ENCODE measurements at regions of chr2 and their contacts with region 1.

Region 1: DNA sequence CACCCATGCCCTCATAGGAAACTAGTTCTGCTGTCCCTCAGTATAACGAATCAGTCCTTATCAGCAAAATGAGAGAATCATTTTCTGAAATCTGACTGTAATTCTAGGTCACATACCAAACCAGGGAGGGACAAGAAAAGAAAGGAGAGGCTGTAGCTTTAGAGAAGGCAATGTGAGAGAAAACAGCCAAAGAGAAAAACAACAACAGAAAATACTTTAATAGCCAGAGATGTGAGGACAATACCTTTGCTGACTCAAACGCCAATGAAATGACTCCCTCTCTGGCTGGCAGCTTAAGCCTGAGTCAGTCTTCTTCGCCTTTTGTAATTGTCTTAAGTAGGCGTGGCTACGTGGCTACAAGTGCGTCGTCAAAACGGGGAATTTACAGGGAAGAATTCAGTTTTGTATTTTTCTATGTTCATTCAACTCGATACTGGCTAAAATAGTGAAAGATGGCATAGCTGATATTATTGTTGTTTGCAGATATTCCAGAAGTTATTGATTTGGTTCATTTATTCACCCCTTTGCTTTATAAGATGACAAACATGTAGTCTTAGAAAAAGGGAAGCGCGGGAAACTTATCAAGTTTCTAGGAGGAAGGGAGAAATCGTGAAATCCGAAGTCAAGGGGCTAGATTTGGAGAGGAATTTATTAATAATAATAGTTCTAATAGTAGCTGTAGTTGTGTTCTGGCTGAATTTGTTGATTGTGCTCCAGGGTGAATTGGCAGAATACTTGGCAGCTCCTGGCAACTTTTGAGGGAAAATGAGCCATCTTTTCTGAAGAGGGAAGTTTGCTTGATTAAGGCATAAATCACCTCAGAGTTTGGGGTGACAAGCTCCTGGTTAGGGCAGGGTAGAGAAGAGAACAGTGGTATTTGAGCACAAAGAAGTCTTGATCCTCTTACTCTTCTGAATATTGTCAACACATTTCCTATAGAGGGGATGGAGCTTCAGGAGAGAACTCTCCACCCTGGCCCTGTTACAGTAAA is at the start of gene IL1A:
- DNase-seq: no peak
- ATAC-seq: no peak
- H3K4me3 ChIP-seq: no peak within 1 kb of the TSS
- H3K27ac ChIP-seq: peak within 1 kb of the TSS; percentile 62
- H3K4me1 ChIP-seq: peaks cover 23% of the 10 kb centered on the region
- H3K27me3 ChIP-seq: no peaks in the 10 kb centered on the region
- CTCF ChIP-seq: no peak
- EP300 ChIP-seq: no peak
- POLR2A ChIP-seq: peak; percentile 70
- RAD21 ChIP-seq: no peak
- polyA plus RNA-seq, gene IL1A: 5.7 to 8.7 TPM

Region 2: GRCh38 chr2:112757265-112757664 is 27.2 kb before region 1 on chr2:
- CTCF ChIA-PET with region 1: interaction called, 6 read pairs
- POLR2A ChIA-PET with region 1: interaction called, 4 read pairs
- RAD21 ChIA-PET with region 1: interaction called, 36 read pairs
- SMC1A ChIA-PET with region 1: interaction called, 30 read pairs
- in situ Hi-C with region 1: no loop called
- intact Hi-C with region 1: no loop called
- DNase-seq: no peak
- ATAC-seq: no peak
- H3K4me3 ChIP-seq: no peak overlapping the region
- H3K27ac ChIP-seq: no peak overlapping the region
- H3K4me1 ChIP-seq: no peaks in the 10 kb centered on the region
- H3K27me3 ChIP-seq: no peaks in the 10 kb centered on the region
- CTCF ChIP-seq: no peak
- EP300 ChIP-seq: no peak
- POLR2A ChIP-seq: no peak
- RAD21 ChIP-seq: no peak

Region 3: GRCh38 chr2:112764071-112765044 is 20.1 kb before region 1 on chr2 and contains the start of gene CKAP2L:
- CTCF ChIA-PET with region 1: interaction called, 5 read pairs
- POLR2A ChIA-PET with region 1: interaction called, 4 read pairs
- RAD21 ChIA-PET with region 1: interaction called, 10 read pairs
- SMC1A ChIA-PET with region 1: interaction called, 30 read pairs
- in situ Hi-C with region 1: no loop called
- intact Hi-C with region 1: no loop called
- DNase-seq: peak; percentile 94
- ATAC-seq: peak; percentile 98
- H3K4me3 ChIP-seq: peak within 1 kb of the TSS; percentile 81
- H3K27ac ChIP-seq: peak within 1 kb of the TSS; percentile 80
- H3K4me1 ChIP-seq: peaks cover 3% of the 10 kb centered on the region
- H3K27me3 ChIP-seq: no peaks in the 10 kb centered on the region
- CTCF ChIP-seq: no peak
- EP300 ChIP-seq: peak in 1 of 2 experiments; percentile 37; a peak in 1 of 4 replicates
- POLR2A ChIP-seq: peak; percentile 79
- RAD21 ChIP-seq: no peak; the same call in 1 of the 2 replicates
- polyA plus RNA-seq, gene CKAP2L: 10.5 to 19.7 TPM

Region 4: DNA sequence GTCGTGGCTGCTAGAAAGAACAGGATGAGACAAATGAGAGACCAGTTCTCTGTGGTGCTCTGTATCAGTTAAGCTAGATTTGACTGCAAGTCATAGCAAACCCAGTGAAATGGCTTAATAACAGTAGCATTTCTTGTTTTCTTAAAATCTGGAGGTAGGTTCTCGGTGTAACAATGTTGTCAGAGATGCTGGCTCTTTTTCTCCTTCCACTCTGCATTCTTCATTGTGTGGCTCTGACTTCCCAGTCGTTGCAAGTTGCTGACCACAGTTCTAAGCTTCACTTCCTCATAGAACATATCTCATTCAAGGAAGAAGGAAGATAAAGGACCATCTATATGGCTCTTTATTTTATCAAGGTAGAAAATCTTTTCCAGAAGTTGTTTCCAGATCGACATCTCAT is 12.2 kb before region 1 on chr2:
- CTCF ChIA-PET with region 1: interaction called, 6 read pairs
- POLR2A ChIA-PET with region 1: interaction called, 3 read pairs
- RAD21 ChIA-PET with region 1: interaction called, 4 read pairs
- SMC1A ChIA-PET with region 1: interaction called, 26 read pairs
- in situ Hi-C with region 1: no loop called
- intact Hi-C with region 1: no loop called
- DNase-seq: no peak
- ATAC-seq: no peak
- H3K4me3 ChIP-seq: no peak overlapping the region
- H3K27ac ChIP-seq: no peak overlapping the region
- H3K4me1 ChIP-seq: no peaks in the 10 kb centered on the region
- H3K27me3 ChIP-seq: no peaks in the 10 kb centered on the region
- CTCF ChIP-seq: no peak
- EP300 ChIP-seq: no peak
- POLR2A ChIP-seq: no peak
- RAD21 ChIP-seq: no peak

Region 5: DNA sequence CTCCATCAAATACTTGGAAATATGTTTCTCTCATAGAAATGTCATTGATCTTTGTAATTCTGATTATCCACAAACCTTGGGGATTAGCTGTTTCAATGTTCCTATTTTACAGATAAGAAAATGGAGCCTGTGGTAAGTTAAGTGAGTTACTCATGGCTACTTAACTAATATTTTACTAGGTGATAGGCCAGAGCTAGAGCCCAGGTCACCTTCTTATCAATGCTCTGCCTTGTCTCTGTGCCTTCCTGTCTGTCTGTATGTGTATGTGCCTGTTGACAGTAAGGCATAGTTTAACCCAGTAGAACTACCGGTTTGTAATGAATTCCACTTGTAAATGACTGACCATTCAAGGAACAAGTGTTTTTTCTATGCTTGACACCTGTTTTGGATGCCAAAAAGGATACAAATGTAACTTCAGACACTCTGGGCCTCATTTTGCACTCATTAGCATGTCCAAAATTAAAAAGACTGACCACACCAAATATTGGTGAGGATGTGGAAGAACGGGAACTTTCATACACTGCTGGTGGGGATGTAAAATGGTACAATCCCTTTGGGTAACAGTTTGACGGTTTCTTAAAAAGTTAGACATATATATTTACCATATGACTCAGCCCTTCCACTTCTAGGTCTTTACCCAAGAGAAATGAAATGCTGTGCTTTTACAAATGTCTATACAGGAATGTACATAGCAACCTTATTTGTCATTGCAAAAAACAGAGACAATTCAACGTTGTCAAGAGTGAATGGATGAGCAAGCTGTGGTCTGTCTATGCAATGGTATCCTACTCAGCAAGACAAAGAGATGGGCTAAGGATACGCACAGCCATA is 19.4 kb after region 1 on chr2:
- CTCF ChIA-PET with region 1: interaction called, 5 read pairs
- POLR2A ChIA-PET with region 1: interaction called, 6 read pairs
- RAD21 ChIA-PET with region 1: interaction called, 22 read pairs
- SMC1A ChIA-PET with region 1: interaction called, 33 read pairs
- in situ Hi-C with region 1: no loop called
- intact Hi-C with region 1: loop called (anchors 2 kb)
- DNase-seq: no peak
- ATAC-seq: peak; percentile 71
- H3K4me3 ChIP-seq: no peak overlapping the region
- H3K27ac ChIP-seq: peak overlapping the region; percentile 43
- H3K4me1 ChIP-seq: peaks cover 19% of the 10 kb centered on the region
- H3K27me3 ChIP-seq: no peaks in the 10 kb centered on the region
- CTCF ChIP-seq: no peak
- EP300 ChIP-seq: peak; percentile 47 to 69; a peak in 3 of 4 replicates
- POLR2A ChIP-seq: no peak
- RAD21 ChIP-seq: no peak

Region 6: GRCh38 chr2:112811841-112812306 is 27.4 kb after region 1 on chr2:
- CTCF ChIA-PET with region 1: interaction called, 8 read pairs
- POLR2A ChIA-PET with region 1: interaction called, 6 read pairs
- RAD21 ChIA-PET with region 1: interaction called, 26 read pairs
- SMC1A ChIA-PET with region 1: interaction called, 30 read pairs
- in situ Hi-C with region 1: no loop called
- intact Hi-C with region 1: no loop called
- DNase-seq: no peak
- ATAC-seq: peak; percentile 76
- H3K4me3 ChIP-seq: no peak overlapping the region
- H3K27ac ChIP-seq: peak overlapping the region; percentile 55
- H3K4me1 ChIP-seq: peaks cover 15% of the 10 kb centered on the region
- H3K27me3 ChIP-seq: no peaks in the 10 kb centered on the region
- CTCF ChIP-seq: no peak
- EP300 ChIP-seq: no peak
- POLR2A ChIP-seq: no peak
- RAD21 ChIP-seq: 0 out of 2 replicates have a peak, but pooled peaks have one; percentile 8

Region 7: DNA sequence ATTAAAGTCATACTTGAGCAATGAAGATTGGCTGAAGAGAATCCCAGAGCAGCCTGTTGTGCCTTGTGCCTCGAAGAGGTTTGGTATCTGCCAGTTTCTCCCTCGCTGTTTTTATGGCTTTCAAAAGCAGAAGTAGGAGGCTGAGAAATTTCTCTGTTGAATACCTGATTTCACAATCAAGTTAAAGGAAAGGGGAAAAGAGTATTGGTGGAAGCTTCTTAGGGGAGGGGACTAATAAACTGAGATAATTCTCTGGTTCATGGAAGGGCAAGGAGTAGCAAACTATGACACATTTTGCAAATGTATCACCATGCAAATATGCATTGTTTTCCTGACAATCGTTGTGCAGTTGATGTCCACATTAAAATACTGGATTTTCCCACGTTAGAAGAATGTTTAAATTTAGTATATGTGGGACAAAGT is 52.2 kb after region 1 on chr2 and contains the start of gene IL1B:
- CTCF ChIA-PET with region 1: interaction called, 6 read pairs
- POLR2A ChIA-PET with region 1: interaction called, 3 read pairs
- RAD21 ChIA-PET with region 1: interaction called, 6 read pairs
- SMC1A ChIA-PET with region 1: interaction called, 26 read pairs
- in situ Hi-C with region 1: no loop called
- intact Hi-C with region 1: no loop called
- DNase-seq: no peak
- ATAC-seq: peak; percentile 21
- H3K4me3 ChIP-seq: no peak within 1 kb of the TSS
- H3K27ac ChIP-seq: no peak within 1 kb of the TSS
- H3K4me1 ChIP-seq: peaks cover 34% of the 10 kb centered on the region
- H3K27me3 ChIP-seq: no peaks in the 10 kb centered on the region
- CTCF ChIP-seq: no peak
- EP300 ChIP-seq: no peak
- POLR2A ChIP-seq: no peak
- RAD21 ChIP-seq: no peak
- polyA plus RNA-seq, gene IL1B: 0.57 to 1.6 TPM